ENCODE measurements at regions of chr5 and their contacts with region 1.

Region 1: GRCh38 chr5:129767906-129768380 is 20.0 kb downstream of the MINAR2 start:
- DNase-seq: peak; percentile 55 to 87
- ATAC-seq: peak; percentile 83 to 94
- H3K4me3 ChIP-seq: no peak overlapping the region
- H3K27ac ChIP-seq: no peak overlapping the region
- H3K4me1 ChIP-seq: no peaks in the 10 kb centered on the region
- CTCF ChIP-seq: peak; percentile 99
- EP300 ChIP-seq: no peak
- POLR2A ChIP-seq: no peak
- RAD21 ChIP-seq: peak; percentile 89 to 90

Region 2: DNA sequence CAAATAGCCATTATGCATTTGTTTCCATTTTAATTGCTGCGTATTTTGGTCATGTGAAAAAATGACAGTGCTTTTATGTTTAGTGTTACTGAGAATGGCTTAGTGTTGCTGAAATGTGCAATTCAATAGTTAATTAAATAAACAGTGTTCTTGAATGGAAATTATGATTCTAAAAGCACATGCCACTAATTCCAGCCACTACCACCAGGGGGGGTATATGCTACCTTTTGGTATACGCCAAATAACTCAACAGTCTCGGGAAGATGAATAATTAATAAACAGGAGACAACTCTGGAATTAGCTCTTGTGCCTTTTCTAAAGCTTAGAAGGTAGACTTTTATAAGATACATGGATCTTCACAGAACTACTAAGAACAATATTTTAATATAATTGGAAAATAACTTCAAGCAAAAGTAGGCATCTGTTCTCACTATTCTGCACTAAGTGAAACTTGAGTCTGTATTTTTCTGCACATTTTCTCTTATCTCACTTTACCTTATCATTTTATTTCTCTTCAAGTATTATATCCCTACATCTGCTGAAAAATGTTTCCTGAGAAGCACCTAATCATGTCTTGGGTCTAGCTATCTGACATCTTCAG is 103.5 kb before region 1 on chr5:
- CTCF ChIA-PET with region 1: interaction called, 12 read pairs
- POLR2A ChIA-PET with region 1: no interaction called
- DNase-seq: peak; percentile 13 to 48
- ATAC-seq: 0 out of 6 replicates have a peak, but pooled peaks of 1 of the 2 experiments have one; percentile 42
- H3K4me3 ChIP-seq: no peak overlapping the region
- H3K27ac ChIP-seq: no peak overlapping the region
- H3K4me1 ChIP-seq: no peaks in the 10 kb centered on the region
- CTCF ChIP-seq: peak; percentile 56
- EP300 ChIP-seq: no peak
- POLR2A ChIP-seq: no peak
- RAD21 ChIP-seq: peak; percentile 23 to 33; a peak in 2 of 5 replicates

Region 3: GRCh38 chr5:129748913-129749880 is 18.7 kb before region 1 on chr5:
- CTCF ChIA-PET with region 1: interaction called, 10 read pairs
- POLR2A ChIA-PET with region 1: no interaction called
- DNase-seq: no peak
- ATAC-seq: no peak
- H3K4me3 ChIP-seq: no peak overlapping the region
- H3K27ac ChIP-seq: no peak overlapping the region
- H3K4me1 ChIP-seq: no peaks in the 10 kb centered on the region
- CTCF ChIP-seq: no peak
- EP300 ChIP-seq: no peak
- POLR2A ChIP-seq: no peak
- RAD21 ChIP-seq: no peak

Region 4: DNA sequence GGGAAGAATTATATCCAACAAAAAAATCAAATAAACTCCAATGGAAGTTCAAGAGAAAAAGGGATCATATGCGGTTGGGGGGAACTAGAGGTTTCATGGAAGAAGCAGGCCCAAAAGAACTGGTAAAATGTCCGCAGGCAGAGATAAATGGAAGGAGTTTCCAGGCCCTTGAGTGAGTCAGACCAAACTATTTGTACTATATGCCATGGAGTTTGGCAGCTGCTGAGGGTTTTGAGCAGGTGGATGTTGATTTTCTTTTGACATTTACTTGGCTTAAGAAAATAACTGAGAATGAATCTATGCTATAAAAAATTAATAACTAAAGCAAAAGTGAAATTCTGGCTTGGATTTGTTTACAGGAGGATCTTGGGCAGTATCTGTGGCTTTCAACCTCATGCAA is 13.7 kb after region 1 on chr5:
- CTCF ChIA-PET with region 1: interaction called, 11 read pairs
- POLR2A ChIA-PET with region 1: no interaction called
- DNase-seq: no peak
- ATAC-seq: no peak
- H3K4me3 ChIP-seq: no peak overlapping the region
- H3K27ac ChIP-seq: no peak overlapping the region
- H3K4me1 ChIP-seq: no peaks in the 10 kb centered on the region
- CTCF ChIP-seq: no peak
- EP300 ChIP-seq: no peak
- POLR2A ChIP-seq: no peak
- RAD21 ChIP-seq: no peak

Region 5: DNA sequence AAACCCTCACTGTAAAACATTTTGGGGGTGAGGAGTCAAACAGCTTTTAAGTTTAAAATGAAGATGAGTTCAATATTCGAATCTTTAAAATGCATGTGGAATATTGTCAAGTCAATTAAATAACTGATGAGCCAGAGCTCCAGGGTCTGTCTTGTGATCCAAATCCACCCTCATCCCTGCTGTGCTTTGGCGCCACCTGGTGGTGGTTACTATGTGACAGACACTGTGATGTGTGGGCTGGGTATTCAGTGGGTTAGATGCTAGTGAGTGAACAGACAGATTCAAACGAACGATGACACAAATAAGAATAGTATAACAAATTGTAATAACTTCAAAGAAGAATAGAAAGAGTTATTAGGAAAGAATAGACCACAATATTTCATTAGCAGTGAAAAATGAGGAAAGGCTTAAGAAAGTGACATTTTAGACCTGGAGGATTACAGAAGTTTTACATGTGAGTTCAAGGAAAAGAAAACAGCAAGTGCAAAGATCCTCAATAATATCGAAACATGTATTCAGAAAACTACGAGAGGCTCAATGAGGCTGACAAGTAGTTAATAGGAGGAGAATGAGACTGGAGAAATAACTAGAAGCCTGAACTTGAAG is 84.9 kb after region 1 on chr5:
- CTCF ChIA-PET with region 1: interaction called, 93 read pairs
- POLR2A ChIA-PET with region 1: no interaction called
- DNase-seq: peak; percentile 43 to 67
- ATAC-seq: peak; percentile 94 to 99
- H3K4me3 ChIP-seq: no peak overlapping the region
- H3K27ac ChIP-seq: no peak overlapping the region
- H3K4me1 ChIP-seq: no peaks in the 10 kb centered on the region
- CTCF ChIP-seq: peak; percentile 86
- EP300 ChIP-seq: no peak
- POLR2A ChIP-seq: no peak
- RAD21 ChIP-seq: peak; percentile 62 to 72

Region 6: DNA sequence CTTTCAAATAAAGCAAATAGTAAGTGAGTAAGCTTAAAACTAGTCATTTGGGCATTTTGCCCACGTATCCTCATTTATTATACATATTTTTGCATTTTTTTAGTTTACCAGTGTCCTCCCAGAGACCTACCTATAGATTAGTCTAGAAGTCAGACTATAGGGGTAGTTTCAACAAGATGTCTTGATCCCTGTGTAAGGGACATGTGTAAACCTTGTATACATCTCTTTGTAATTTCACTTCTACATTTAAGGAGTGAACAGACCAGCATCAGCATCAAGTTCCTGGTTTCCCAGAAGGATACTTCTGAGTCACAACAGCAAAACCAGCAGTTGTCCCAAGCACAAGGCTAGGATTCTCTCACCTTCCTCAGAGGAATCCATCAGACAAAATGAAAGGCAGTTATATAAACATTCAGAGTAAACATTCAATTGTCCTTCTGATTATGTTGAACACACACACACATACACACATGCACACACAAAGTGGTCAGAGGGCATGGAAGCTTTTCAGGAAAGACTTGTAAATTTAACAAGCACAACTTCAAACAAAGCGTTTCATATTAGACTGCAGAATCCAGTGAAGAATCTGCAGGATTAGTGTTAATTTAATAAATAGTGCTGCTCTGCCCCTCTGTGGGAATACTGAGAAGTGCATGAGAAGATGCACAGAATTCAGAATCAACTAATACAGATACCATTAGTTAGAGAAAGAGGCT is 1341.8 kb after region 1 on chr5:
- CTCF ChIA-PET with region 1: interaction called, 14 read pairs
- POLR2A ChIA-PET with region 1: no interaction called
- DNase-seq: peak; percentile 46 to 47
- ATAC-seq: peak; percentile 80 to 94; a peak in 5 of 6 replicates
- H3K4me3 ChIP-seq: no peak overlapping the region
- H3K27ac ChIP-seq: no peak overlapping the region
- H3K4me1 ChIP-seq: no peaks in the 10 kb centered on the region
- CTCF ChIP-seq: peak; percentile 90
- EP300 ChIP-seq: no peak
- POLR2A ChIP-seq: no peak
- RAD21 ChIP-seq: peak; percentile 89 to 92